ENCODE measurements at regions of chr4 and their contacts with region 1.

Region 1: GRCh38 chr4:168784786-168785461 is 225.1 kb downstream of the CBR4 start:
- DNase-seq: no peak
- H3K4me3 ChIP-seq: no peak overlapping the region
- H3K27me3 ChIP-seq: no peaks in the 10 kb centered on the region
- CTCF ChIP-seq: no peak

Region 2: GRCh38 chr4:168631241-168632162 is 153.4 kb before region 1 on chr4:
- CTCF ChIA-PET with region 1: no interaction called
- POLR2A ChIA-PET with region 1: interaction called, 12 read pairs
- DNase-seq: no peak
- H3K4me3 ChIP-seq: peak overlapping the region; percentile 35
- H3K27me3 ChIP-seq: peaks cover 11% of the 10 kb centered on the region
- CTCF ChIP-seq: peak; percentile 38

Region 3: GRCh38 chr4:168674077-168674747 is 110.7 kb before region 1 on chr4:
- CTCF ChIA-PET with region 1: no interaction called
- POLR2A ChIA-PET with region 1: interaction called, 20 read pairs
- DNase-seq: no peak
- H3K4me3 ChIP-seq: no peak overlapping the region
- H3K27me3 ChIP-seq: peaks cover 3% of the 10 kb centered on the region; the same call in 1 of the 2 replicates
- CTCF ChIP-seq: no peak

Region 4: GRCh38 chr4:168815379-168816345 is 30.7 kb after region 1 on chr4:
- CTCF ChIA-PET with region 1: no interaction called
- POLR2A ChIA-PET with region 1: no interaction called
- DNase-seq: no peak
- H3K4me3 ChIP-seq: no peak overlapping the region
- H3K27me3 ChIP-seq: no peaks in the 10 kb centered on the region
- CTCF ChIP-seq: no peak

Region 5: GRCh38 chr4:169024762-169025161 is 239.8 kb after region 1 on chr4:
- CTCF ChIA-PET with region 1: no interaction called
- POLR2A ChIA-PET with region 1: no interaction called
- DNase-seq: no peak
- H3K4me3 ChIP-seq: no peak overlapping the region
- H3K27me3 ChIP-seq: no peaks in the 10 kb centered on the region
- CTCF ChIP-seq: peak; percentile 72

Measured in BJ (cell line).